ENCODE measurements at regions of chr14 and their contacts with region 1.

Region 1: DNA sequence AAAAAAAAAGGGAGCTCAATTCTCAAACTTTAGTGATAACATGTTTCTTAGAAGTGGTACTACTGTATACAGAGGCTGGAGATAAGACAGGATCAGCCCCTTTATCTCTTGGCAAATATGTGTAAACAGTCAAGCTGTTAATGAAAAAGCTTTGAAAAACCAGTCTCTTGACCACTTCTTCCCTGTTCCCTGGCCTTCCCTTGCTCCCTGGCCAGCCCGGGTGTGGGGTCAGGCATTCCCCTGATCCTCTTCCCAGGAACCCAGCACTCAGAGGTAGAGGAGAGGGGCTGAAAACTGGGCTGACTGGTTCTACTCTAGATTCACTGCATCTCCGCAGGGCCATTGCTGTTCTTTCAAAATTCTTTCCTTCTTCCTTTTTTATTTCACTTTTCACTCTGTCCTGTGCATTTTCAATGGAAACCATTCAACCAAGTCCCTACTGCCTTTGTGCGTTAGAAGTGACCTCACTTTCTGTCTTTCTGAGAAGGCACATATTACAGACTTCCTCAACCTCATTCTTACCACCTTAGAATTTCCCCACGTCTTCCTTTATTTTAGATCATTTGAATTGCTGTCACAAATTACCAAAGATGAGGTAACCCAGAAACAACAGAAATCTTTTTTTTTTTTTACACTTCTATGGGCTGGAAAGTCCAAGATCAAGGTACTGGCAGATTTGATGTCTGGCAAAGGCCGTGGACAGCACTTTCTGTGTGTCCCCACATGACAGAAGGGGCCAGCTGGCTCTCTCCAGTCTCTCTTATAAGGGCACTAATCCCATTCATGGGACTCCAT is 5.7 kb downstream of the GNG2 start:
- DNase-seq: peak; percentile 47 to 68 (median 54)
- H3K4me3 ChIP-seq: peak overlapping the region in 1 of 2 donors; percentile 12
- H3K4me3 Mint-ChIP-seq: no peak overlapping the region
- H3K27ac ChIP-seq: peak overlapping the region; percentile 52
- H3K27ac Mint-ChIP-seq: no peak overlapping the region
- H3K4me1 ChIP-seq: peaks cover 81% of the 10 kb centered on the region
- H3K4me1 Mint-ChIP-seq: peaks cover 24 to 40% (median 31%) of the 10 kb centered on the region in 4 donors
- H3K27me3 ChIP-seq: no peaks in the 10 kb centered on the region
- H3K27me3 Mint-ChIP-seq: no peaks in the 10 kb centered on the region

Region 2: DNA sequence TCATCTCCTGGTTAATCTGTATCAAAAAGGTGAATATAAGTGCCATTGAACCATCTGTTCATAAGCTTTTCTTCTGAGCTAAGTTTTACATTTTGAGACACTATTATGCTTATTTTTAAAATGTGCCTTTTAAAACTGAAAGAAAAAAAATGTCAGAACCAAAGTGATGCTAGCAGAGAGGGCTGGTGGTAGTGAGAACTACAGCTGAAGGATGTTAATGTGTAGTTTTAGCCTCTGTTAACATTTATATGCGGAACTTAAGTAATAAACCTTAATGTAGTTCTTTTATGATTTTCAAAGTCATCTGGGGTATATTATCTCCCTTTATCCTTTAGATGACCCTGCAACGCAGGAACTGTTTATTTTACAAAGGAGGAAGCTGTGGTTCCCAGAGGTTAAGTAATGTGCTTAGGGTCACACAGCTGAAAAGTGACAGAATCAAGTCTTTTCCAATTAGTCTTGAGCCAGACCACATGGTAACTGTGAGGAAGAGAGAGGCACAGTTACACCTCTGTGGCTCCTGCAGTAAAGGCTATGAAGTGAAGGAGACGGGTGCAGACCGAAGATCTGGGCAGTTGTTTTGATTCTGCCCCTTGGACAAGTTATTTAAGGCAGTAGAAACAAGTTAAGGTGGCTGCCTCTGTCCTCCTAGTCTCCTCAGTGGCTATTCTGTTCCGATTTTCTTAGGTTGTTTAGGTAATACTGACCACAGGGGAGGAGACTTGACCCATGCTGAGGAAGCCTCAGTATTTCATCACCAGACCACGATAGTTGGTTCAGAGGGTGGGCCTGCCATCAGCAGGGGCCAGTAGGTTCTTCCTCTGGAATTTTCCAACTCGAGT is 18.2 kb after region 1 on chr14:
- CTCF ChIA-PET with region 1: interaction called, 21 read pairs
- POLR2A ChIA-PET with region 1: interaction called, 53 read pairs
- intact Hi-C with region 1: no loop called
- DNase-seq: no peak
- H3K4me3 ChIP-seq: no peak overlapping the region
- H3K4me3 Mint-ChIP-seq: peak overlapping the region; percentile 26 to 86 (median 52)
- H3K27ac ChIP-seq: peak overlapping the region; percentile 12
- H3K27ac Mint-ChIP-seq: peak overlapping the region; percentile 43 to 83 (median 78)
- H3K4me1 ChIP-seq: peaks cover 89% of the 10 kb centered on the region
- H3K4me1 Mint-ChIP-seq: peaks cover 49 to 89% (median 73%) of the 10 kb centered on the region in 4 donors
- H3K27me3 ChIP-seq: no peaks in the 10 kb centered on the region
- H3K27me3 Mint-ChIP-seq: no peaks in the 10 kb centered on the region

Measured in CD4-positive, alpha-beta memory T cell (primary cell).